ENCODE measurements at regions of chr3 and their contacts with region 1.

Region 1: GRCh38 chr3:71128961-71129360 is 454.6 kb downstream of the FOXP1 start:
- DNase-seq: no peak
- H3K4me3 ChIP-seq: peak overlapping the region; percentile 51 to 60 (median 56)
- H3K27ac ChIP-seq: peak overlapping the region; percentile 76 to 92
- H3K4me1 ChIP-seq: peaks cover 0 to 6% of the 10 kb centered on the region in 2 donors
- H3K27me3 ChIP-seq: no peaks in the 10 kb centered on the region
- CTCF ChIP-seq: no peak
- POLR2A ChIP-seq: no peak

Region 2: GRCh38 chr3:70905491-70905890 is 223.5 kb before region 1 on chr3:
- intact Hi-C with region 1: no loop called
- DNase-seq: no peak
- H3K4me3 ChIP-seq: no peak overlapping the region
- H3K27ac ChIP-seq: no peak overlapping the region
- H3K4me1 ChIP-seq: no peaks in the 10 kb centered on the region
- H3K27me3 ChIP-seq: no peaks in the 10 kb centered on the region
- CTCF ChIP-seq: no peak
- POLR2A ChIP-seq: no peak

Region 3: GRCh38 chr3:71069797-71070196 is 59.2 kb before region 1 on chr3:
- intact Hi-C with region 1: no loop called
- DNase-seq: peak in 1 of 2 donors; percentile 80
- H3K4me3 ChIP-seq: no peak overlapping the region
- H3K27ac ChIP-seq: peak overlapping the region; percentile 62 to 73
- H3K4me1 ChIP-seq: peaks cover 0 to 9% of the 10 kb centered on the region in 2 donors
- H3K27me3 ChIP-seq: no peaks in the 10 kb centered on the region
- CTCF ChIP-seq: peak in 1 of 3 donors; percentile 44
- POLR2A ChIP-seq: no peak

Region 4: GRCh38 chr3:71111784-71112440 is 17.0 kb before region 1 on chr3:
- intact Hi-C with region 1: loop called (anchors 1 kb)
- DNase-seq: no peak
- H3K4me3 ChIP-seq: no peak overlapping the region
- H3K27ac ChIP-seq: peak overlapping the region; percentile 25 to 62
- H3K4me1 ChIP-seq: peaks cover 0 to 10% of the 10 kb centered on the region in 2 donors
- H3K27me3 ChIP-seq: no peaks in the 10 kb centered on the region
- CTCF ChIP-seq: no peak
- POLR2A ChIP-seq: no peak

Measured in breast epithelium (tissue), 4 donors.